Mammary epithelial cell (primary cell): ENCODE measurements at regions of chr2 and their contacts with region 1.

Region 1: GRCh38 chr2:134232868-134233727 is 20.8 kb upstream of the MGAT5 start:
- DNase-seq: peak; percentile 28
- H3K4me3 ChIP-seq: no peak overlapping the region
- H3K27ac ChIP-seq: no peak overlapping the region
- H3K4me1 ChIP-seq: peaks cover 12% of the 10 kb centered on the region
- H3K27me3 ChIP-seq: no peaks in the 10 kb centered on the region
- CTCF ChIP-seq: no peak

Region 2: DNA sequence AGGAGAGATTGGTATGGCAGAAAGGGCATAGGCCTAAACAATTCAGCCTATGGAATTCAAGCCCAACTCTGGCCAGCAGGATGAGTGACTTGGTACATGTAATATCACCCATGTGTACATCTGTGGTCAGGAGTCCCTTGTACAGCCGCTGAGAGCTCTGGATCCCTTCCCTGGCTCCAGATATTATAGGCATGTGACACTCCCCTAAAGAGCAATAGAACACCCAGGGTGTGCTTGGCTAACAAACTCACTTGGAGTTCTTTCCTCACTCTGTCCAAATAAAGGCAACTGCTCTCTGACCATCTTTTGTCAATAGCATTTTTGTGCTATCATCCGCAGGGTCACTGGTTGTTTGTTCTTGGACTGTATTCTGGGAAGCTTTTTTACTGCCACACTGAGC is 467.4 kb before region 1 on chr2:
- CTCF ChIA-PET with region 1: no interaction called
- dilution Hi-C with region 1: no loop called
- in situ Hi-C with region 1: no loop called
- intact Hi-C with region 1: no loop called
- DNase-seq: no peak
- H3K4me3 ChIP-seq: no peak overlapping the region
- H3K27ac ChIP-seq: no peak overlapping the region
- H3K4me1 ChIP-seq: peaks cover 5% of the 10 kb centered on the region
- H3K27me3 ChIP-seq: no peaks in the 10 kb centered on the region
- CTCF ChIP-seq: no peak

Region 3: GRCh38 chr2:134198006-134198634 is 35.0 kb before region 1 on chr2:
- CTCF ChIA-PET with region 1: no interaction called
- dilution Hi-C with region 1: loop called (anchors 5 kb)
- in situ Hi-C with region 1: no loop called
- intact Hi-C with region 1: no loop called
- DNase-seq: no peak
- H3K4me3 ChIP-seq: no peak overlapping the region
- H3K27ac ChIP-seq: no peak overlapping the region
- H3K4me1 ChIP-seq: peaks cover 7% of the 10 kb centered on the region
- H3K27me3 ChIP-seq: no peaks in the 10 kb centered on the region
- CTCF ChIP-seq: no peak